ENCODE measurements at regions of chr9 and their contacts with region 1.

Region 1: GRCh38 chr9:15606643-15607472 is 54.0 kb downstream of the CCDC171 start:
- DNase-seq: peak; percentile 61
- ATAC-seq: peak; percentile 41
- H3K4me3 ChIP-seq: no peak overlapping the region
- H3K4me3 Mint-ChIP-seq: no peak overlapping the region
- H3K27ac ChIP-seq: no peak overlapping the region
- H3K27ac Mint-ChIP-seq: no peak overlapping the region
- H3K4me1 ChIP-seq: no peaks in the 10 kb centered on the region
- H3K4me1 Mint-ChIP-seq: no peaks in the 10 kb centered on the region
- H3K27me3 ChIP-seq: no peaks in the 10 kb centered on the region
- H3K27me3 Mint-ChIP-seq: no peaks in the 10 kb centered on the region
- CTCF ChIP-seq: peak; percentile 82

Region 2: GRCh38 chr9:15104826-15105420 is 501.9 kb before region 1 on chr9:
- CTCF ChIA-PET with region 1: no interaction called
- POLR2A ChIA-PET with region 1: no interaction called
- intact Hi-C with region 1: loop called (anchors 10 kb)
- DNase-seq: peak; percentile 32
- ATAC-seq: peak; percentile 41
- H3K4me3 ChIP-seq: no peak overlapping the region
- H3K4me3 Mint-ChIP-seq: no peak overlapping the region
- H3K27ac ChIP-seq: no peak overlapping the region
- H3K27ac Mint-ChIP-seq: no peak overlapping the region
- H3K4me1 ChIP-seq: no peaks in the 10 kb centered on the region
- H3K4me1 Mint-ChIP-seq: no peaks in the 10 kb centered on the region
- H3K27me3 ChIP-seq: no peaks in the 10 kb centered on the region
- H3K27me3 Mint-ChIP-seq: peaks cover 14% of the 10 kb centered on the region
- CTCF ChIP-seq: peak; percentile 66

Region 3: GRCh38 chr9:15271403-15271802 is 335.5 kb before region 1 on chr9:
- CTCF ChIA-PET with region 1: interaction called, 14 read pairs
- POLR2A ChIA-PET with region 1: no interaction called
- intact Hi-C with region 1: no loop called
- DNase-seq: no peak
- ATAC-seq: no peak
- H3K4me3 ChIP-seq: no peak overlapping the region
- H3K4me3 Mint-ChIP-seq: no peak overlapping the region
- H3K27ac ChIP-seq: no peak overlapping the region
- H3K27ac Mint-ChIP-seq: no peak overlapping the region
- H3K4me1 ChIP-seq: no peaks in the 10 kb centered on the region
- H3K4me1 Mint-ChIP-seq: peaks cover 6% of the 10 kb centered on the region
- H3K27me3 ChIP-seq: no peaks in the 10 kb centered on the region
- H3K27me3 Mint-ChIP-seq: no peaks in the 10 kb centered on the region
- CTCF ChIP-seq: no peak

Region 4: DNA sequence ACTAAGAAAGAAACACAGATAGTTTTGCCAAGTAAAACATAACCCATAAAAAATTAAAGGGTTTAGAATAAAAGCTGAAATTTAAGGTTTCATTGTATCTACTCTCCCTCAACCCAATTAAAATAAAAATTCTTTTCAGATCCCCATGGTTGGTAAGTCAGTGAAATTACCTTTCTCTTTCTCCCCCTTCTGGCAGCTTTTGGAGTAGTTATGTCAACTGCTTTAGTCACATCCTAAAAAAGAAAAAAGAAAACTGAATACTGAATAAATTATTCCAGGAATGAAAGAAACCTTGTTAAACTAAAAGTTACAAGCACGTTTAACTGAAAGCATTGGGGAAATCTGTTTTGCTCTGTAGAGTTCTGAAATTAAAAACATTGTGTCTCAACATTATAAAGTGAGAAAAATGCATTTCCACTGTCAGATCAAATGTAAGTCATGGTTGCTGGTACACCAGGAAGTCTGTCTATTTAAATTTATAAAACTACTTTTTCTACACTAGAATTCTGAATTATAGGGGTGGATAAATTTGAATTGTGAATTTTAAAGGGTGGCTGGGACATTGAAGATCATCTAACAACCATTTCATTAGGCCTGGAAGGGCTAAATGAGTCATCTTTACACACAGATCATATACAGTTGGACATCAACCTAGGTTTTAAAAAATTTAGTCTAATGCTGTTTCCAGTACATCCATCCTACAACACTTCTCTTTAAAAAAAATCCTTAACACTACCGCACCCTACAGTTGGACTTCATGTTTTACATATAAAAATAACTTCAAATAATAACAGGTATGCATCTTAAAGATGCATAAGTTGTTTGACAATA is 120.8 kb before region 1 on chr9:
- CTCF ChIA-PET with region 1: no interaction called
- POLR2A ChIA-PET with region 1: no interaction called
- intact Hi-C with region 1: loop called (anchors 5 kb)
- DNase-seq: peak; percentile 16
- ATAC-seq: no peak
- H3K4me3 ChIP-seq: no peak overlapping the region
- H3K4me3 Mint-ChIP-seq: no peak overlapping the region
- H3K27ac ChIP-seq: peak overlapping the region in 1 of 2 donors; percentile 6
- H3K27ac Mint-ChIP-seq: no peak overlapping the region
- H3K4me1 ChIP-seq: no peaks in the 10 kb centered on the region
- H3K4me1 Mint-ChIP-seq: peaks cover 15% of the 10 kb centered on the region
- H3K27me3 ChIP-seq: no peaks in the 10 kb centered on the region
- H3K27me3 Mint-ChIP-seq: no peaks in the 10 kb centered on the region
- CTCF ChIP-seq: peak; percentile 67

Region 5: GRCh38 chr9:15510789-15511575 is 95.9 kb before region 1 on chr9 and contains the start of gene PSIP1:
- CTCF ChIA-PET with region 1: interaction called, 31 read pairs
- POLR2A ChIA-PET with region 1: no interaction called
- intact Hi-C with region 1: loop called (anchors 2 kb)
- DNase-seq: peak; percentile 95
- ATAC-seq: peak; percentile 79
- H3K4me3 ChIP-seq: peak within 1 kb of the TSS; percentile 60 to 96 (median 94)
- H3K4me3 Mint-ChIP-seq: peak within 1 kb of the TSS; percentile 95
- H3K27ac ChIP-seq: peak within 1 kb of the TSS; percentile 97 to 98
- H3K27ac Mint-ChIP-seq: peak within 1 kb of the TSS; percentile 100
- H3K4me1 ChIP-seq: peaks cover 30 to 40% of the 10 kb centered on the region in 2 donors
- H3K4me1 Mint-ChIP-seq: peaks cover 58% of the 10 kb centered on the region
- H3K27me3 ChIP-seq: no peaks in the 10 kb centered on the region
- H3K27me3 Mint-ChIP-seq: no peaks in the 10 kb centered on the region
- CTCF ChIP-seq: no peak
- total RNA-seq, gene PSIP1: 124 and 134 TPM in 2 replicates

Measured in B cell (primary cell).